ENCODE measurements at regions of chr6 and their contacts with region 1.

Region 1: DNA sequence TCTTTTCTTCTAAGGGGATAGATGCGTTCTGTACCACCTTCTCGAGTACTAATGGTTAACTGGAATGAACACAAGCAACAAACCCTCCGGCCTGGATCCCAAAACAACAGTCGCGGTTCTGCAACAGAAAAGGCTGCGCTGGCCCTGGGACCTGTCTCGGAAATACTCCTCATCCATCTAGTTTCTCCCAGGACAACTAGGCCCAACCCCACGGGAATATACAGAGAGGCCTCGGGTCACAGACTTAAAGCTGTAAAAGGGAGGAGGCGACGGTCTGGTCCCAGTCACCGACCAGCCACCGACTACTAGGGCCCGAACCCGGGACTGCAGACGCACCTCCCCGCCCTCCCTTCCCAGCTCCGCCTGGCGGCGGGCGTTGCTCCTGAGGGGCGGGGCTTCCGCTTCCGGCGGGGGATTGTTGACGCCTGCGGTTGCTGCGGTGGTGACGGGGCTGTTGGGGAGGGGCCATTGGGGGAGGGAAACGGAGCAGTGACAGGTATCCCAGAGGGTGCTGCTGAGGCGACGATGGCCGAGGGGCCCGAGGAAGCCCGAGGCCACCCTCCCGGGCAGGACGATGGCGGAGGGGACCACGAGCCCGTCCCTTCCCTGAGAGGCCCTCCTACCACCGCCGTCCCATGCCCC is at the start of gene FAM8A1:
- DNase-seq: peak; percentile 98
- H3K4me3 ChIP-seq: peak within 1 kb of the TSS; percentile 84 to 96 (median 92)
- H3K27ac ChIP-seq: peak within 1 kb of the TSS; percentile 98 to 99 (median 98)
- H3K4me1 ChIP-seq: peaks cover 4 to 47% (median 15%) of the 10 kb centered on the region in 4 donors
- H3K27me3 ChIP-seq: no peaks in the 10 kb centered on the region
- CTCF ChIP-seq: peak; percentile 59 to 89 (median 62)
- EP300 ChIP-seq: no peak
- POLR2A ChIP-seq: peak; percentile 90
- total RNA-seq, gene FAM8A1: 8.8 to 60.8 (median 49.9) TPM

Region 2: DNA sequence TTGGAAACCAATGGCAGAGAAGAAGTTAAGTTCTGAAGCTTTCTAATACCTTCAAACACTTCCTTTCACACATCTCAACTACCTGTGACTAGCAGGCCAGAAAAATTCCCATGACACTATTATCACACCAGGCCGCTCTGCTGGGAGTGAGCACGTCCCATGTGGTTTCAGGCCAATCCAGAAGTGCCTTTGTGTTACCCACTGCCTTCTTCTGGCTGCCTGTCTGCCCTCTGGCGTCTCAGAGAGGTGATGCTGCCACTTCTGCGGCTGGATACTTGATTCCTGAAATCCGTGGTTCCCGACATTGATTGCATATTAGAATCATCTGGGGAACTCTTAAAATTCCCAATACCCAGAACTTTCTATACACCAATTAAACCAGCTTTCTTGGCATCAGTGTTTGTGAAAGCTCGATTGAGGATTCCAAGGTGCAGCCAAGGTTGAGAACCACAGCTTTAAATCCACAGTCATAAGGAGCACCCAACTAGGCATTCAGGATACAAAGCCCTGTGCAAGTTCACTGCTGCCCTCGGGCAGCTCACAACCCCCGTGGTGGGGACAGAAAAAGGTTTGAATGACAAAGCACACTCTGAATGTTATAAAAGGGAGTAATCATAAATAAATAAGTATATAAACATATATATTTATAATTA is 432.6 kb before region 1 on chr6:
- in situ Hi-C with region 1: loop called in 1 of 4 experiments (anchors 10 kb)
- intact Hi-C with region 1: no loop called
- DNase-seq: peak; percentile 41
- H3K4me3 ChIP-seq: no peak overlapping the region
- H3K27ac ChIP-seq: no peak overlapping the region
- H3K4me1 ChIP-seq: no peaks in the 10 kb centered on the region
- H3K27me3 ChIP-seq: no peaks in the 10 kb centered on the region
- CTCF ChIP-seq: peak; percentile 16 to 41 (median 37)
- EP300 ChIP-seq: no peak
- POLR2A ChIP-seq: no peak

Region 3: DNA sequence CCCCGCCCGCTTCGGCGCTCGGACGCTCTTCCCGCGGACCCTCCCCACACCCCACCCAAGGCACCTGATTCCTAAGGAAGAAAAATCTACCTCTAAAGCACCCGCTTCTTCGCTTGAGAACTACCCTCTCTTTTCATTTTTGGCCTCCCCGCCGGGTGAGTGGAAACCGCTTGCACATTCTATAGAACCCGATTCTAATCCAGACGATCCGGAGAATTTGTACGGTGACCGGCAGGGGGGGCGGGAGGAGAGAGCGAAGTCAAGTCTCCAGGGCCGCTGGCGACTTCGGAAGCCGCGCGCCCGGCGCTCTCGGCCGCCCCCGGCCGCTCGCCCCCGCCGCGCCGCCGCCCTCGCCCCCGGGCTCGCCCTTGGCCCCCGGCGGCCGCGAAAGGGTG is 318.9 kb before region 1 on chr6 and contains the start of gene RBM24:
- in situ Hi-C with region 1: loop called in 1 of 4 experiments (anchors 25 kb)
- intact Hi-C with region 1: no loop called
- DNase-seq: peak; percentile 82
- H3K4me3 ChIP-seq: peak within 1 kb of the TSS; percentile 61 to 92 (median 72)
- H3K27ac ChIP-seq: peak within 1 kb of the TSS; percentile 75 to 93 (median 84)
- H3K4me1 ChIP-seq: peaks cover 0 to 34% (median 6%) of the 10 kb centered on the region in 4 donors
- H3K27me3 ChIP-seq: peaks cover 18% of the 10 kb centered on the region
- CTCF ChIP-seq: peak; percentile 14 to 37 (median 29)
- EP300 ChIP-seq: no peak
- POLR2A ChIP-seq: no peak
- total RNA-seq, gene RBM24: 4.8 to 10.2 TPM in 2 of 4 donors, not detected in the others

Region 4: GRCh38 chr6:17790489-17790888 is 190.5 kb after region 1 on chr6:
- in situ Hi-C with region 1: loop called in 1 of 4 experiments (anchors 10 kb)
- intact Hi-C with region 1: no loop called
- DNase-seq: no peak
- H3K4me3 ChIP-seq: no peak overlapping the region
- H3K27ac ChIP-seq: no peak overlapping the region
- H3K4me1 ChIP-seq: no peaks in the 10 kb centered on the region
- H3K27me3 ChIP-seq: no peaks in the 10 kb centered on the region
- CTCF ChIP-seq: no peak
- EP300 ChIP-seq: no peak
- POLR2A ChIP-seq: no peak

Region 5: GRCh38 chr6:17820055-17820454 is 220.0 kb after region 1 on chr6:
- in situ Hi-C with region 1: loop called in 2 of 4 experiments (anchors 25 kb)
- intact Hi-C with region 1: no loop called
- DNase-seq: no peak
- H3K4me3 ChIP-seq: no peak overlapping the region
- H3K27ac ChIP-seq: no peak overlapping the region
- H3K4me1 ChIP-seq: no peaks in the 10 kb centered on the region
- H3K27me3 ChIP-seq: no peaks in the 10 kb centered on the region
- CTCF ChIP-seq: no peak
- EP300 ChIP-seq: no peak
- POLR2A ChIP-seq: no peak

Region 6: DNA sequence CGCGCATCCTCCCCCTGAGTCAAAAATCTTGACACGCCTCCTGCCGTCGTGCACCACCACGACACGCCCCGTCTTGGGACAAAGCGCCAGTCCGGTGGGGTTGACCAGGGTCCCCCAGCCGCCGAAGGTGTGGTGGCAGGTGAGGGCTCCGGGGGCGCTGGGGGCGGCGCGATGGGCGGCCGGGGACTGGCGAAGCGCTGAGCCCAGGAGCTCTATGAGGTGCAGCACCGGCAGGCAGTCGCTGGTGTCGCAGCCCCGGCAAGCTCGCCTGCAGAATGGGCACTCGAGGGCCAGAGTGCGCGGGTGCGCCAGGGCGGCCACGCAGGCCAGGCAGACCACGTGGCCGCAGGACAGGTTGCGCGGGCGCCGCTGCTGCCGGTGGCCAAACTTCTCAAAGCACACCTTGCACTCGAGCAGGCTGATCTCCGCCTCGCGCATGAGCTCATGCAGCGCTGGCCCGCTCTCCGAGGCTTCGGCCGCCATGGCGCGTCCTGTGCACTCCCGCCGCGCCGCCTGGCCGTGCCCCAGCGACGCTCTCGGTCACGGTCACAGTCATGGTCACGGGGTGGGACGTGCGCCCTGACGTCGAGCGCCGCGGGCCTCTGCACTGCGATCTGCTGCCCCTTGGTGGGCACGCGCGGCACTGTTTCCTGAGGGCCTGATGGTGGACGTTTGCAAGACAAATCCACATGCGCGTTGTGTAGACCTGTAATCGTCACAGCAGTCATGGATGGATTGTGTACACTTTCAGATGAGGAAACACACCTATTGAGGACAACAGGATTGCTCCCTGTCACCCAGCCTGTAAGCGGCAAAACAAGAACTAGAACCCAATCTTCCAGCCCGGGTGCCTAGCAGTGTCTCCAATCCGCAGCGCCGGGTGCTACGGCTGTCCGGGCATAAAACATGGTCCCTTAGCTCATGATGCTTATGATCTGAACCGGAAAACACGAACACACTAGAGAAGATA is 522.4 kb after region 1 on chr6 and contains the start of gene NHLRC1:
- in situ Hi-C with region 1: loop called in 2 of 4 experiments (anchors 25 kb)
- intact Hi-C with region 1: no loop called
- DNase-seq: peak; percentile 89
- H3K4me3 ChIP-seq: peak within 1 kb of the TSS; percentile 23 to 54 (median 38)
- H3K27ac ChIP-seq: peak within 1 kb of the TSS; percentile 57 to 74 (median 64)
- H3K4me1 ChIP-seq: peaks cover 0 to 16% (median 7%) of the 10 kb centered on the region in 4 donors
- H3K27me3 ChIP-seq: no peaks in the 10 kb centered on the region
- CTCF ChIP-seq: peak; percentile 89 to 98 (median 93)
- EP300 ChIP-seq: no peak
- POLR2A ChIP-seq: peak; percentile 49
- total RNA-seq, gene NHLRC1: 1.1 to 2.1 TPM in 2 of 4 donors, not detected in the others

Region 7: GRCh38 chr6:18148304-18149025 is 548.5 kb after region 1 on chr6:
- in situ Hi-C with region 1: loop called in 1 of 4 experiments (anchors 25 kb)
- intact Hi-C with region 1: no loop called
- DNase-seq: peak; percentile 58
- H3K4me3 ChIP-seq: no peak overlapping the region
- H3K27ac ChIP-seq: peak overlapping the region; percentile 27 to 74 (median 58)
- H3K4me1 ChIP-seq: peaks cover 0 to 30% (median 18%) of the 10 kb centered on the region in 4 donors
- H3K27me3 ChIP-seq: no peaks in the 10 kb centered on the region
- CTCF ChIP-seq: no peak
- EP300 ChIP-seq: no peak
- POLR2A ChIP-seq: no peak

Region 8: GRCh38 chr6:18562726-18563125 is 962.7 kb after region 1 on chr6:
- in situ Hi-C with region 1: no loop called
- intact Hi-C with region 1: no loop called
- DNase-seq: peak; percentile 10
- H3K4me3 ChIP-seq: no peak overlapping the region
- H3K27ac ChIP-seq: no peak overlapping the region
- H3K4me1 ChIP-seq: peaks cover 0 to 5% (median 0%) of the 10 kb centered on the region in 4 donors
- H3K27me3 ChIP-seq: no peaks in the 10 kb centered on the region
- CTCF ChIP-seq: no peak
- EP300 ChIP-seq: no peak
- POLR2A ChIP-seq: no peak